AG04450 (cell line): ENCODE measurements at regions of chr14 and their contacts with region 1.

Region 1: DNA sequence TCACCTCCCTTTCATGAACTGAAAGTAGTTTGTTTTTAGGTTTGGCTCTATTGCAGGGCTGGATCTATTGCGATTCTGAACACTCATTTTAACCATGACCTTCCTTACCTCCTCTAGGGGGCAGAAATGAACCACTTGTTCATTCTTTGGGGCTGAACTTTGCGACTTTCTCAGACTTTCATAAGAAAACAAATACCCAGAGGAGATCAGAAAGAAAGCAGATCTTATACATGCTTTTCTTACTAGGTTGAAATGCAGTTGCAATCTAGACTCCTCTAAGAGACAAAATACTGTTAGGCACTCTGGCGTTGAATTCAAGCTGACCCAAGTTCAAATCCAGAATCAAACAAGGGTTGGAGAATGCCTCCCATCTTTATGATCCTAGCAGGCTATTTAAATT is 32.6 kb upstream of the PLEKHG3 start:
- DNase-seq: peak; percentile 39
- H3K4me3 ChIP-seq: no peak overlapping the region
- H3K27ac ChIP-seq: no peak overlapping the region
- H3K27me3 ChIP-seq: peaks cover 7% of the 10 kb centered on the region
- CTCF ChIP-seq: peak; percentile 89

Region 2: DNA sequence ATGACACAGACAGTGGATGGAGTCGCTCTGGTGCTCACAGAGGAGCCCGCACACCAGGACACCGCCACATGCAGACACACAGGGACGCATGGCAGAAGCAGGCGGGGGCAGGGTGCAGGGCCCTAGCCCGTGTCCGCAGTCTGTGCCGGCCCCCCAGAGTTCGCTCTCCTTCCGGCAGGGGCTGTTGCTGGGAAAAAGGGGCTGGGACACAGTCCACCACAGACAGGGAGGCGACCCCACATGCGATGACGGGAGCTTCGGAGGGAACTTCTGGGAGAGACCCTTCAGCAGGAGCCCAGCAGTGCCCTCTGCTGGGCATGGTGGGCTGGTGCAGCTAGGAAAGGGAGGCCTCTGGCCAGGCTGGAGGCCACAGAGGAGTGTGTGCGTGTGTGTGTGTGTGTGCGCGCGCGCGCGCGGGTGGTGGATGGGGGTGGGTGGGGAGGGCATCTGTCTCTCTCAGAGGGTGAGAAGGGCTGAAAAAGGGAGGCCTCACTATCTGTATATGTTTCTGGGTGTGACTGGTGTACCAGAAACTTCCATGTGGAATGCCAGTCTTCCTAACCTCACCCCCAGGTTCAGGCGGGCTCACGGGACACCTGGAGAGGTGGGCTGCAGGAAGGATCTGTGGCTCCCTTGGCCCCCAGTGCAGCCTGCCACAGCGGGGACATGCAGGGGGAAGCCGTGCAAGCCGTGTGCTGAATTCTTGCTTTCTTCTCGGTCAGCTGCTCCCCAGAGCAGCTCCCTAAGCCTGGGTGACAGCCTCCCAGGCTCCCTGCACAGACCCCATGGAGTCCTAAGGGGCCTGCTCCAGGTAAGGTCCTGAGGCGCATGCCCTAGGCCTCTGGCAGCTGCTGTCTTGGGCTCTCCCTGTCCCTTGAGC is 93.3 kb after region 1 on chr14:
- CTCF ChIA-PET with region 1: interaction called, 24 read pairs
- POLR2A ChIA-PET with region 1: no interaction called
- DNase-seq: peak; percentile 49
- H3K4me3 ChIP-seq: peak overlapping the region; percentile 35; the same call in 1 of the 2 replicates
- H3K27ac ChIP-seq: no peak overlapping the region
- H3K27me3 ChIP-seq: peaks cover 10% of the 10 kb centered on the region
- CTCF ChIP-seq: peak; percentile 93